WTC11 (cell line): ENCODE measurements at regions of chr11 and their contacts with region 1.

Region 1: DNA sequence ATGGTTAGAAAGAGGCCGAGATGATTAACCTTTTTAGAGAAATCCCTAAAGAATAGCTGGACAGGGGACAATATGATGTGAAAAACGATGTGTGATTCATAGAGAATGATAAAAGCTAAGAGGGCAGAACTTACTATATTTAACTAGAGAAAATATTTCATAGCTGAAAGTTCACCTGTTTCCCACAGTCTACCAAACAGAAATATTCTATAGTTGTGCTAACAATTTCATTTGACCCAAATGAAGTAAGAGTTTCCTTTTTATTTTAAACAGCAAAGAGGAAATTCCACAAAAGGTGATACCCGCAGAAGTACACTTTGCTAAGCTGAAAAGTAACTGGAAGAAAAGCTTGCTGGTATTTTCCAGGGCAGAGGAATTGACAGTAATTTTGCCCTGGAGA is 26.7 kb downstream of the ALKBH8 start:
- DNase-seq: no peak
- ATAC-seq: no peak
- H3K4me3 Mint-ChIP-seq: no peak overlapping the region
- H3K27ac Mint-ChIP-seq: no peak overlapping the region
- H3K4me1 Mint-ChIP-seq: no peaks in the 10 kb centered on the region
- H3K27me3 Mint-ChIP-seq: no peaks in the 10 kb centered on the region
- CTCF ChIP-seq: no peak

Region 2: GRCh38 chr11:107549253-107549953 is 10.6 kb after region 1 on chr11:
- CTCF ChIA-PET with region 1: interaction called, 10 read pairs
- POLR2A ChIA-PET with region 1: no interaction called
- DNase-seq: no peak
- ATAC-seq: no peak
- H3K4me3 Mint-ChIP-seq: no peak overlapping the region
- H3K27ac Mint-ChIP-seq: no peak overlapping the region
- H3K4me1 Mint-ChIP-seq: no peaks in the 10 kb centered on the region
- H3K27me3 Mint-ChIP-seq: no peaks in the 10 kb centered on the region
- CTCF ChIP-seq: peak; percentile 53